ENCODE measurements at regions of chr6 and their contacts with region 1.

Region 1: GRCh38 chr6:110179401-110180227 is at the start of gene WASF1:
- DNase-seq: peak; percentile 97
- total RNA-seq, gene WASF1: 0.78 TPM

Region 2: GRCh38 chr6:109690737-109691621 is 488.6 kb before region 1 on chr6 and contains the starts of genes AK9 and FIG4:
- intact Hi-C with region 1: loop called (anchors 5 kb)
- DNase-seq: peak; percentile 97
- total RNA-seq, gene AK9: 8.3 TPM
- total RNA-seq, gene FIG4: 9.4 TPM

Region 3: DNA sequence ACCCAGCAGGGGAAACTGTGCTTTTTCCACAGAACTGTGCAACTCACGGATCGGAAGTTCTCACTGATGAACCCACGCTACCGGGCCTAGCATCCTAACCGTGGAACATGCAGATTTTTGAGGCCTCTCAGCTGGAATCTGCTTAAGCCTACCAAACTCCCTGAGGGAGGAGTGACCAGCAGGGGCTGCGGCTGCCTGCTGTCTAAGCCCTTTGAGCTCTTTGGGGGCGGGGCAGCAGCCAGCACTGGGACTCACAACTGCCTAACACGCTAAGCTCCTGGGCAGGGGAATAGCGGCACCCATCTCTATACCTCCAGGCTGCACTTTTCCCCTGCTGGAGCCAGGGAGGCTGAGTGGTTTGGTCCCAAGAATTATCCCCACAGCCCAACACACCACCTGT is 198.9 kb after region 1 on chr6:
- intact Hi-C with region 1: no loop called
- DNase-seq: no peak

Region 4: DNA sequence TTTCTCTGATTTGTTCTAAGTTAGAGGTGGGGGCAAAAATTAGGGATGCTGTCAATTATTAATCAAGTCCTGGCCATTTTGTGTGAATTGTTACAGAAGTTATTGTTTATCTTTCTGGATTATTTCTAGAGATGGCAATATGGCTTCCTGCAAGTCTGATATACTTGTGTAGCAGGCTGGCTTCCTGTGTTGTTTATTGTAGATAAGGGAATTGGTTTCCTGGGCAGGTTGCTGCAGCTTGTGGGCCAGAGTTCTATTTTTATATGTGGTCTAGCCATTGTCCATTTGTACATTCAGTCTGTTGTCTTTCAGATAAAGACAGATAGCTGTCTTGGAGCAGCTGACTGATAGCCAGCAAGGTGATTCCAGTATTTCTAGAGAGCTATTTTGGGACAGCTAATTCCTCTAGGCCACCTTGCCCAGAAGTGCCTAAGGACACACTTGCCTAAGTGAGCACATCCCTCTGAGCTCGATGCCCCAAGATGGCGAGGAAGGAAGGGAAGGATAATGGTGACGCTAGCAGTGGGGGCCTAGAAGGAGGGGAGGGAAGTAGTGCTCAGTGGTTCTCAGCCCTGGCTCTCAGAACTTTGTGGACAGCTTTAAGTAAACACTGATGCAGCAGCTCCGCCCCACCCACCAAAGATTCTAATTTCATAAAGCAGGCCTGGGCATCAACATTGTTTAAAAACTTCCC is 210.2 kb after region 1 on chr6:
- intact Hi-C with region 1: loop called (anchors 2 kb)
- DNase-seq: no peak

Region 5: GRCh38 chr6:111721753-111722154 is 1542.1 kb after region 1 on chr6:
- intact Hi-C with region 1: no loop called
- DNase-seq: no peak

Measured in cardiac septum (tissue), 1 donor.